ENCODE measurements at regions of chr17 and their contacts with region 1.

Region 1: DNA sequence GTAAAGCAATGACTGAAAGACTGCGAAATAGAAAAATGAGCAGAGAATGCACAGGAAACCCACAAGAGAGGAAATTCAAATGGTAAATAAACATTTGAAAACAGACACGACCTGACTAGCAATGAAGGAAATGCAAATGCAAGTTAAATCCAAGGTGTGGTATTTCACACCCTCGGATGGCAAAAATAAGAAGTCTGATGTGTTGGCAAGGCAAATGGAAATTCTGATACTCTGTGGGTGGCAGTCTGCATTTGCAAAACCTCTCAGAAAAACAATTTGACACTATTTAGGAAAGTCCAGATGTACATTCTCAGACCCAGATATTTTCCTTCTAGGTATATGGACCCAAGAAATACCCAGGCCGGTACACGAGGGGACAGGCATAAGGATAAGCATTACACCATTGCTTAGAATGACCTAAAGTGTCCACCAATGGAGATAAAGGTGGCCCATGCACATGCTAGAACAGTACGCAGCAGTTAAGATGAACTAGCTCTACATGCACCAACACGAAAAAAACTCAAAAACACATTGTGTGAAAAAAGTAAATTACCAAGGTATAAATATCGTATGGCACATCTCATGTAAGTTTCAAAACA is 116.7 kb downstream of the GAS7 start:
- DNase-seq: peak; percentile 17 to 58
- ATAC-seq: peak; percentile 57 to 78 (median 72)
- H3K4me3 ChIP-seq: no peak overlapping the region
- H3K4me3 Mint-ChIP-seq: peak overlapping the region; percentile 81
- H3K27ac ChIP-seq: peak overlapping the region; percentile 72
- H3K27ac Mint-ChIP-seq: peak overlapping the region; percentile 87 to 94
- H3K4me1 ChIP-seq: peaks cover 33% of the 10 kb centered on the region
- H3K4me1 Mint-ChIP-seq: peaks cover 72 to 76% of the 10 kb centered on the region in 2 donors
- H3K27me3 ChIP-seq: no peaks in the 10 kb centered on the region
- H3K27me3 Mint-ChIP-seq: no peaks in the 10 kb centered on the region
- CTCF ChIP-seq: no peak

Region 2: GRCh38 chr17:9937241-9937761 is 144.4 kb before region 1 on chr17:
- intact Hi-C with region 1: no loop called
- DNase-seq: no peak
- ATAC-seq: no peak
- H3K4me3 ChIP-seq: no peak overlapping the region
- H3K4me3 Mint-ChIP-seq: no peak overlapping the region
- H3K27ac ChIP-seq: no peak overlapping the region
- H3K27ac Mint-ChIP-seq: no peak overlapping the region
- H3K4me1 ChIP-seq: no peaks in the 10 kb centered on the region
- H3K4me1 Mint-ChIP-seq: no peaks in the 10 kb centered on the region
- H3K27me3 ChIP-seq: no peaks in the 10 kb centered on the region
- H3K27me3 Mint-ChIP-seq: no peaks in the 10 kb centered on the region
- CTCF ChIP-seq: no peak

Region 3: DNA sequence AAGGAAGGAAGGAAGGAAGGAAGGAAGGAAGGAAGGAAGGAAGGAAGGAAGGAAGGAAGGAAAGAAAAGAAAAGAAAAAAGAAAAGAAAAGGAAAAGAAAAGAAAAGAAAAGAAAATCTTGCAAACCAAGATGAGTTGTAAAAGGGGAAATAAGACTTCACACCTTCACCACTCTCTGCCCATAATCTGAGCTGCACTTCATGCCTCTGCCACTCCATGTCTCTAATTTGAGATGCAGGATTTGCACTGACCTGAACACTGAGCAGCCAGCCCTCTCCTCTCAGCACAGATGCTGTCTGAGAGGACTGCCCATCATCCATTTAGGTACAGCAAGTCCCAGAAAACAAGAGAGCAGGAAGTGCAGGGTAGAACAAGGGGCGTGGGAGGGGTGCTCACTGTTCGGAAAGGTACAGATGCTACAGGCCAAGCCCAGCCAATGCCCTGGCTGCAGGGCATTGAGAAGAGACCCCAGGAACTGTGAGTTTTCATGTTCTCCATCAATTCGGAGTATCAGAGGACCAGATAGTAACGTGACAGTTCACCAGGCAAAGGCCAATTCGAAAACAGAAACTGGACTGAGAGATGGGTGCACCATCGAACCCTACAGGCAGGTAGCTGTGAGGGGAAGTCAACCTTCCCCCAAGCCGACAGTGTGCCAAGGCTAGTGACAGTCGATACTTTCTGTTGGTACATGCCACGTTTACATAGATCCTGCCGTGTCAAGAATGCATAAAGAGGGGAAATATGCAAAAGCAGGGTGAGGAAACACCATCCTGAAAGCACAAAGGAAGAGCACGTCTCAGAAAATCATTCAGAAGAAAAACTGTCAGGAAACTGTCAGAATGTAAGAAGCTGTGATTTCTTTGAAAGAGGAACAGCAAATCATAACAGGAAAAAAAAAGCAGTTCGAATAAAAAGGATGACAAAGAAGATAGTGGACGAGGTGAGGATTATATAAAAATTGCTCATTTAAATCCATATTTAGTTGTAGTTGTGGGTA is 34.6 kb before region 1 on chr17:
- intact Hi-C with region 1: loop called (anchors 5 kb)
- DNase-seq: peak; percentile 20 to 42
- ATAC-seq: peak; percentile 72 to 80 (median 79)
- H3K4me3 ChIP-seq: no peak overlapping the region
- H3K4me3 Mint-ChIP-seq: peak overlapping the region; percentile 85
- H3K27ac ChIP-seq: peak overlapping the region; percentile 32
- H3K27ac Mint-ChIP-seq: peak overlapping the region; percentile 80 to 87
- H3K4me1 ChIP-seq: peaks cover 49% of the 10 kb centered on the region
- H3K4me1 Mint-ChIP-seq: peaks cover 76 to 83% of the 10 kb centered on the region in 2 donors
- H3K27me3 ChIP-seq: no peaks in the 10 kb centered on the region
- H3K27me3 Mint-ChIP-seq: no peaks in the 10 kb centered on the region
- CTCF ChIP-seq: peak; percentile 12

Region 4: DNA sequence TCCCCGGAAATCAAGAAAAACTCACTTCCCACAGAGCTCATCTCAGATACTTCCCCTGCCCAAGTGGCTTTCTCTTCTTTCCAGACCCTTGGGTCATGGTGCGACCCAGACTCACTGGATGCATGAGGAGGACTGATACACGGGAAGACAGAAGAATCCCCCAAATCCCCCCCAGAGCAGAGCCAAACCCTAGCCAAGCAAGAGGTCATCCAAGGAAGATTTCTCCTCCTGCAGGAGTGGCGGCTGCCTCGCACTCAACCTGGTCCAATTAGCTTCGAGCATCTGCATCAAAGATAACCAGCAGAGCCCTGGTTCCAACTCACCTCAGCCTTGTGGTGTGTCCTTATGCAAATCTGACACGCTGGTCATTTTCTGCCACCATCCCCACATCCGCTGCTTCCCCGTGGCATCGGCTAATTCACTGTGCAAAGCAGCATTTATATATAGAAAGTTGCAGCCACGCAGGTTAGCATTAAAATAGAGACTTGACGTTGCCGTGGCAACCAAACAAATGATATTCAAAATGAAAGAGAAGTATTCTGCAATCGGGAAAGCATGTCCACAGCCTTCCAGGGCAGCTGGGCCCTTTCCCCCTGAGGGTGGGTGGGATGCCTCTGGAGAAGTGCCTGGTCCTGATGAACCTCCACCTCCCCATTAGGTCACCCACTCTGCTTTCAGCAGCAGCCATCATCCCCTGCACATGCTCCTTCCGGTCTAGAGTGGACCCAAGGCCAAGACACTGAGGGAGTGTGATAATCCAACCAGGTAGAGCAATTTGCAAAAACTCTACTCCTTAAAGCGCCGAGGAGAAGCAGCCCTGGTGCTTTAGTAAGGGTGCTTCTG is 22.1 kb before region 1 on chr17:
- intact Hi-C with region 1: loop called (anchors 2 kb)
- DNase-seq: peak; percentile 33 to 61
- ATAC-seq: peak; percentile 15 to 58 (median 51)
- H3K4me3 ChIP-seq: no peak overlapping the region
- H3K4me3 Mint-ChIP-seq: no peak overlapping the region
- H3K27ac ChIP-seq: peak overlapping the region; percentile 66
- H3K27ac Mint-ChIP-seq: peak overlapping the region; percentile 59 to 88
- H3K4me1 ChIP-seq: peaks cover 64% of the 10 kb centered on the region
- H3K4me1 Mint-ChIP-seq: peaks cover 54 to 68% of the 10 kb centered on the region in 2 donors
- H3K27me3 ChIP-seq: no peaks in the 10 kb centered on the region
- H3K27me3 Mint-ChIP-seq: no peaks in the 10 kb centered on the region
- CTCF ChIP-seq: no peak

Region 5: GRCh38 chr17:10099051-10099571 is 17.4 kb after region 1 on chr17:
- intact Hi-C with region 1: no loop called
- DNase-seq: no peak
- ATAC-seq: no peak
- H3K4me3 ChIP-seq: no peak overlapping the region
- H3K4me3 Mint-ChIP-seq: no peak overlapping the region
- H3K27ac ChIP-seq: no peak overlapping the region
- H3K27ac Mint-ChIP-seq: no peak overlapping the region
- H3K4me1 ChIP-seq: peaks cover 25% of the 10 kb centered on the region
- H3K4me1 Mint-ChIP-seq: peaks cover 40 to 46% of the 10 kb centered on the region in 2 donors
- H3K27me3 ChIP-seq: no peaks in the 10 kb centered on the region
- H3K27me3 Mint-ChIP-seq: no peaks in the 10 kb centered on the region
- CTCF ChIP-seq: no peak

Region 6: GRCh38 chr17:10286324-10286723 is 204.7 kb after region 1 on chr17:
- intact Hi-C with region 1: no loop called
- DNase-seq: no peak
- ATAC-seq: no peak
- H3K4me3 ChIP-seq: no peak overlapping the region
- H3K4me3 Mint-ChIP-seq: no peak overlapping the region
- H3K27ac ChIP-seq: no peak overlapping the region
- H3K27ac Mint-ChIP-seq: no peak overlapping the region
- H3K4me1 ChIP-seq: no peaks in the 10 kb centered on the region
- H3K4me1 Mint-ChIP-seq: no peaks in the 10 kb centered on the region
- H3K27me3 ChIP-seq: peaks cover 2% of the 10 kb centered on the region
- H3K27me3 Mint-ChIP-seq: peaks cover 18 to 36% of the 10 kb centered on the region in 2 donors
- CTCF ChIP-seq: no peak

Measured in natural killer cell (primary cell).